ENCODE measurements at regions of chr3 and their contacts with region 1.

Region 1: DNA sequence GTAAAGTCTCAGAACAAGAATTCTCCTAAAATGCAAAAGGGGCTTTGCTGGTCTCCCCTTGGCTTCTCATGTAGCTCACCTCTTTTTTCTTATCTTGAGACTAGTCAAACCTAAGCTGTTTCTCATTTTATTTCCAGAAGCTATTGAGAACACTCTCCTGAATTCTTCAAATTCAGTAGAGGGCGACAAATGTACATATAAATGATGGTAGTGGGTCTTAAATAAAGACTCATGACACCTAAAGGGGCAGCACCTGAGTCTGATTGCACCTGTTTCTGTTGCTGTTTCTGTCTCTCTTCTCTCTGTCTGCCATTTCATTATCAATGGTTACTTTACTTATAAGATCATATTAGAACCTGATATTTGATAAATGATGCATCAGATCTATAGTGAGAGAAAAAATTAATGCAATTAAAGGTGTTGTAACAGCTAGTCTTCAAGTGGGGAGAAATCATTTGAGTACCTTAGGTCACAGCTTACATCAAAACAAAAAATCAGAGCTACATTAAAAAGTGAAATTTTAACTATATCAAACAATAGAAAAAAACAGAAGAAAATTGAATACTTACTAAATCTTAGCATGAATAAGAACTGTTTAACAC is 7.0 kb downstream of the ADIPOQ start:
- DNase-seq: peak; percentile 32
- ATAC-seq: peak; percentile 95
- H3K4me3 Mint-ChIP-seq: no peak overlapping the region
- H3K27ac Mint-ChIP-seq: no peak overlapping the region
- H3K4me1 Mint-ChIP-seq: peaks cover 8% of the 10 kb centered on the region
- H3K27me3 Mint-ChIP-seq: peaks cover 9% of the 10 kb centered on the region
- CTCF ChIP-seq: peak; percentile 47

Region 2: DNA sequence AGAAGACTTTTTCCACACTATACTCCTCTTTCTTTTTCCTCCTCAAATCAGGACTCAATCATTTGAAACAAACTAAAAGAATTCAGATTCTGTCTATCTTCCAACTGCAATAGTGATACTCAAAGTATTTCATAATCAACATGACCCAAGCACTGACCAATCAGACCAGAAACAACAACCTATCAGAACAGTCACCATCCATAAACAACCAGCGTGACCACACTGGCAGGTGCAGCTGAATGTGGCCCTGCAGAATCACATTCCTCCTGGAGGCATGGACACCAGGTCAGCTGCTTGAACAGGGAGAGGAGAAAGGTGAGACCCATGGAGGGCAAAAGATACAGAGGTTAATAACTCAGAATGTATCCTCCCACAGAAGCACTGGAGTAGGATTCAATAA is 170.3 kb before region 1 on chr3:
- CTCF ChIA-PET with region 1: no interaction called
- POLR2A ChIA-PET with region 1: no interaction called
- intact Hi-C with region 1: no loop called
- DNase-seq: no peak
- ATAC-seq: no peak
- H3K4me3 Mint-ChIP-seq: no peak overlapping the region
- H3K27ac Mint-ChIP-seq: no peak overlapping the region
- H3K4me1 Mint-ChIP-seq: no peaks in the 10 kb centered on the region
- H3K27me3 Mint-ChIP-seq: peaks cover 33% of the 10 kb centered on the region
- CTCF ChIP-seq: no peak

Region 3: DNA sequence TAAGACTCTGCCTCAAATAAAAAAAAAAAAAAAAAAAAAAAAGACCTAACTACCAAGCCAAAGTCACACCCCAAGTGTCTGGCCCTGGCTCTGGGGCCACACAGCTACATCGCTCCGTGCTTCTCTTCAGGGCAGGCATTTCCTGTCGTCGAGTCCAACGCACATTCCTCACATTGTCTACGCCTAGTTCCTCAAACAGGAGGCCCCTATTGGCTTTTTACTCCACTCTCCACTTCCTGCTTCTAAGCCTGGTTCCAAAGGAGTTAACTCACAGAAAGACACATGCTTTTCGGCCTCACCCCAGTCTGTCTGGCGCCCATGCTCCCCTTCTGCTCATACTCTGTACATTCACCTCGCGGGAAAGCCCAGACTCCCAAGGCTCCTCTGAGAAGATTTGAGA is 103.5 kb before region 1 on chr3:
- CTCF ChIA-PET with region 1: no interaction called
- POLR2A ChIA-PET with region 1: no interaction called
- intact Hi-C with region 1: no loop called
- DNase-seq: peak; percentile 17
- ATAC-seq: peak; percentile 68
- H3K4me3 Mint-ChIP-seq: no peak overlapping the region
- H3K27ac Mint-ChIP-seq: peak overlapping the region; percentile 12
- H3K4me1 Mint-ChIP-seq: peaks cover 3% of the 10 kb centered on the region
- H3K27me3 Mint-ChIP-seq: no peaks in the 10 kb centered on the region
- CTCF ChIP-seq: no peak

Region 4: DNA sequence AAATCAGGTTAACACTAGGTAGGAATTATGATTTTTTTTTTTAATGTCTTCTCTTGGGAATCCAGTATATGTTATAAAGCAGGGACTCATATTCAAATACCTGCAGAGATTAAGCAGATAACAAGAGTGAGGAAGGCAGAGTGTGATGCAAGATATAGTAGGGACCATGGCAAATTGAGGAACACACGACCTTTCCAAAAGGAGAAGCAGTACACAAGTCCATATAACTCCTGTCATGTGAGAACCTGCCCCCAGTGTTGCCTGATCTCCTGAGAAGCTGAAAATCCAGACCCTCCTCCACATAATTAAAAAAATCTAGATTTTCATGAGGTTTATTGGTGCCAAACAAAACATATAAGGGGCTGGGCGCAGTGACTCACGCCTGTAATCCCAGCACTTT is 46.8 kb before region 1 on chr3:
- CTCF ChIA-PET with region 1: no interaction called
- POLR2A ChIA-PET with region 1: no interaction called
- intact Hi-C with region 1: no loop called
- DNase-seq: no peak
- ATAC-seq: no peak
- H3K4me3 Mint-ChIP-seq: no peak overlapping the region
- H3K27ac Mint-ChIP-seq: no peak overlapping the region
- H3K4me1 Mint-ChIP-seq: peaks cover 40% of the 10 kb centered on the region
- H3K27me3 Mint-ChIP-seq: no peaks in the 10 kb centered on the region
- CTCF ChIP-seq: no peak

Region 5: DNA sequence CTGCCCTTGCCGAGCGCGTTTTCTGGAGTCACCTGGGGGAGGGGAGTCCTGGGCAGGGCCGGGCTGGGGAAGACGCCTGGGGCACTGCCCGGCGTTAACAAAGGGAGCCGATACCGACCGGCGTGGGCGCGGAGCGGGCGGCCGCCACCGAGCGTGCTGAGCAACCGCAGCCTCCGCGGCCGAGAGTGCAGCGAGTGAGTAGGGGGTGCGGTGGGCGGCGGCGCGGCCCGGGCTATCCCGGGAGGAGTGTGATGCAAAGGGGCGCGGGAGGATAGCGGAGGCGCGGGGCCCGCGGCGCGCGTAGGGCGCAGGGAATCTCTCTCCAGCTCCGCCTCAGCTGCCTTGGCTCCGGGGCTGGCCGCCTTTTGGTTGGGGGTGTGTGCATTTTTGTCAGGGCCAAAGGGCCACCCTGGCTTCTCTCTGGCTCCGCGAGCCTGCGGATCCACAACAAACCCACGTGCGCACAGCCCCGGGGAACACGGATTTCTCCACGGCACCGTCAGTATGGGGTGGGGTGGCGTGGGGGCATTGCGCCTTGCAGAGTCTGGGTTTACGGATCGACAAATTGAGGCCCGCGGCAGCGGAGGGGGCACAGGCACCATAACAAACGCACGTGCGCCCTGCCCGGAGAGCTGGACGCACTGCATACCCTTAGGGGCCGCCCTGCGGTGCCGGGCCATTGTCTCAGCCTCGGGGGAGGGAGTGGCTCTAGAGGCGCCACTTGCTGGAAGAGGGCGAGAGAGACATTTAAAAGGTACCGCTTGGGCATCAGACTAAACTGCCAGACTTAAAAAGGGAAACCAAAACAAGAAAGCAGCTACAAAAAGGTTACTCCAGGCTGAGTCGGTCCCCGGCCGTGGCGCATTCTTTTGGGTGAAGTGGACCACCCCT is 81.4 kb after region 1 on chr3:
- CTCF ChIA-PET with region 1: interaction called, 33 read pairs
- POLR2A ChIA-PET with region 1: interaction called, 4 read pairs
- intact Hi-C with region 1: loop called (anchors 2 kb)
- DNase-seq: peak; percentile 73
- ATAC-seq: peak; percentile 77
- H3K4me3 Mint-ChIP-seq: peak overlapping the region; percentile 97
- H3K27ac Mint-ChIP-seq: peak overlapping the region; percentile 93
- H3K4me1 Mint-ChIP-seq: peaks cover 30% of the 10 kb centered on the region
- H3K27me3 Mint-ChIP-seq: no peaks in the 10 kb centered on the region
- CTCF ChIP-seq: no peak

Region 6: GRCh38 chr3:187066228-187066995 is 216.9 kb after region 1 on chr3:
- CTCF ChIA-PET with region 1: interaction called, 10 read pairs
- POLR2A ChIA-PET with region 1: interaction called, 5 read pairs
- intact Hi-C with region 1: no loop called
- DNase-seq: peak; percentile 66
- ATAC-seq: peak; percentile 86
- H3K4me3 Mint-ChIP-seq: no peak overlapping the region
- H3K27ac Mint-ChIP-seq: peak overlapping the region; percentile 56
- H3K4me1 Mint-ChIP-seq: peaks cover 64% of the 10 kb centered on the region
- H3K27me3 Mint-ChIP-seq: no peaks in the 10 kb centered on the region
- CTCF ChIP-seq: peak; percentile 51

Region 7: GRCh38 chr3:187112934-187113793 is 263.7 kb after region 1 on chr3:
- CTCF ChIA-PET with region 1: interaction called, 28 read pairs
- POLR2A ChIA-PET with region 1: no interaction called
- intact Hi-C with region 1: no loop called
- DNase-seq: no peak
- ATAC-seq: peak; percentile 66
- H3K4me3 Mint-ChIP-seq: no peak overlapping the region
- H3K27ac Mint-ChIP-seq: no peak overlapping the region
- H3K4me1 Mint-ChIP-seq: peaks cover 7% of the 10 kb centered on the region
- H3K27me3 Mint-ChIP-seq: no peaks in the 10 kb centered on the region
- CTCF ChIP-seq: peak; percentile 80